ENCODE measurements at regions of chr17 and their contacts with region 1.

Region 1: GRCh38 chr17:40564883-40565768 is at the start of gene CCR7:
- DNase-seq: peak; percentile 79 to 94 (median 91)
- ATAC-seq: peak; percentile 58
- H3K4me3 ChIP-seq: peak within 1 kb of the TSS; percentile 71
- H3K4me3 Mint-ChIP-seq: peak within 1 kb of the TSS; percentile 86
- H3K27ac ChIP-seq: peak within 1 kb of the TSS; percentile 74 to 96
- H3K27ac Mint-ChIP-seq: peak within 1 kb of the TSS; percentile 94
- H3K4me1 ChIP-seq: peaks cover 34% of the 10 kb centered on the region
- H3K4me1 Mint-ChIP-seq: peaks cover 83% of the 10 kb centered on the region
- H3K27me3 ChIP-seq: no peaks in the 10 kb centered on the region
- H3K27me3 Mint-ChIP-seq: no peaks in the 10 kb centered on the region
- CTCF ChIP-seq: no peak
- total RNA-seq, gene CCR7: 196 to 199 TPM

Region 2: DNA sequence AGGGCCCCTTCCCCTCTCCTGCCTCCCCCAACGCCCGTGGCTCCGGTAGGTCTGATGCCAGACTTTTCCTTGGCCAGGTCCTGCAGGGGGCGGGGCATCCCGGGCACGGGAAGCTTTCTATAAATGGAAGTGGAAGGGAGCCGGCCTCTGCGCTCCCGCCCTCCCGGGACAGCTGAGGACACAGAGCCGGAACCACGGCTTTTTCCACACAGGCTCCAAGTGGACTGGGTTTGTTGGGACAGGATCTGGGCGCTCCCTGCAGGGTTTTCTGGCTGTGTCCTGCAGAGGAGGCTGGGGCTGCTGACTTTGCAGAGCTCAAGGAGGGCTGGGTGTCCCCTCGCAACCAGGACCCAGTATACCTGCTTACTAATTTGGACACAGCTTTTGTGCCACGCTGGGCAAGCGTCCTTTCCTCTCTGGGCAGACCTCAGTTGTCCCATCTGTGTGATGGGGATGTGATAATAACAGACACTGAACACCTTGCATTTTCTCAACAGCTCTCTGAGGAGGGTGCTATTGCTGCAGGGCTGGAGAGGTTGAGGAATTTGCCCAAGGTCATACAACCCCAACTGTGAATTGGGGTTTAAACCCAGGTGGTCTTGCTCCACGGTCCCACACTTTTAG is 65.5 kb before region 1 on chr17:
- CTCF ChIA-PET with region 1: no interaction called
- POLR2A ChIA-PET with region 1: no interaction called
- intact Hi-C with region 1: no loop called
- DNase-seq: no peak
- ATAC-seq: no peak
- H3K4me3 ChIP-seq: no peak overlapping the region
- H3K4me3 Mint-ChIP-seq: no peak overlapping the region
- H3K27ac ChIP-seq: no peak overlapping the region
- H3K27ac Mint-ChIP-seq: no peak overlapping the region
- H3K4me1 ChIP-seq: no peaks in the 10 kb centered on the region
- H3K4me1 Mint-ChIP-seq: peaks cover 3% of the 10 kb centered on the region
- H3K27me3 ChIP-seq: no peaks in the 10 kb centered on the region
- H3K27me3 Mint-ChIP-seq: peaks cover 3% of the 10 kb centered on the region
- CTCF ChIP-seq: no peak

Region 3: DNA sequence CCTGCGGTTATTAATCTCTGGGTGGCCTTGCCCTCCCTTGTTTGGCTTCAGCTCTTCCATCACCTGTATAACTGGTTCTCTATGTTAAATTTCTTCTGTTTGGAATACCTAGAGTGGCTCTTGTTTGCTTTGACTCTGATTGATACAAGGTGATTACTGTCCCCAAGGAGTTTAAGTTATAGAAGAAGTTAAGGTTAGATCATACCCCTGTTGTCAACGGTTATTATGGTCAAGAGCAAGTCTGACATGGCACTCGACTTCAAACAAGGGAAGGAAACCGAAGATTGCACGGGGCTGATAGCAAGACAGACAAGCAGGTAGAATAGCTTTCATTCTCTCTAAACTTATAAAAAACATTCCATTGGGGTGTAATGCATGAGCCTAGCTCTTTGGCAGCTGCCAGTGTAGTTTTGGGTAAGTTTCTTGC is 11.1 kb after region 1 on chr17:
- CTCF ChIA-PET with region 1: interaction called, 43 read pairs
- POLR2A ChIA-PET with region 1: interaction called, 32 read pairs
- intact Hi-C with region 1: loop called in 1 of 2 experiments (anchors 1 kb)
- DNase-seq: peak in 2 of 9 experiments; percentile 29 to 48
- ATAC-seq: peak; percentile 54
- H3K4me3 ChIP-seq: no peak overlapping the region
- H3K4me3 Mint-ChIP-seq: peak overlapping the region; percentile 49
- H3K27ac ChIP-seq: peak overlapping the region; percentile 8 to 33
- H3K27ac Mint-ChIP-seq: peak overlapping the region; percentile 93
- H3K4me1 ChIP-seq: peaks cover 56% of the 10 kb centered on the region
- H3K4me1 Mint-ChIP-seq: peaks cover 66% of the 10 kb centered on the region
- H3K27me3 ChIP-seq: no peaks in the 10 kb centered on the region
- H3K27me3 Mint-ChIP-seq: no peaks in the 10 kb centered on the region
- CTCF ChIP-seq: no peak

Region 4: GRCh38 chr17:40582328-40582901 is 17.3 kb after region 1 on chr17:
- CTCF ChIA-PET with region 1: interaction called, 30 read pairs
- POLR2A ChIA-PET with region 1: interaction called, 32 read pairs
- intact Hi-C with region 1: loop called (anchors 1 to 2 kb)
- DNase-seq: peak; percentile 48 to 90 (median 77)
- ATAC-seq: peak; percentile 85
- H3K4me3 ChIP-seq: peak overlapping the region; percentile 15 to 17
- H3K4me3 Mint-ChIP-seq: peak overlapping the region; percentile 79
- H3K27ac ChIP-seq: peak overlapping the region; percentile 60 to 74
- H3K27ac Mint-ChIP-seq: peak overlapping the region; percentile 94
- H3K4me1 ChIP-seq: peaks cover 86% of the 10 kb centered on the region
- H3K4me1 Mint-ChIP-seq: peaks cover 95% of the 10 kb centered on the region
- H3K27me3 ChIP-seq: no peaks in the 10 kb centered on the region
- H3K27me3 Mint-ChIP-seq: no peaks in the 10 kb centered on the region
- CTCF ChIP-seq: no peak

Region 5: GRCh38 chr17:40598663-40599467 is 33.7 kb after region 1 on chr17:
- CTCF ChIA-PET with region 1: interaction called, 168 read pairs
- POLR2A ChIA-PET with region 1: interaction called, 251 read pairs
- intact Hi-C with region 1: loop called (anchors 1 kb)
- DNase-seq: peak in 8 of 9 experiments; percentile 48 to 95 (median 70)
- ATAC-seq: peak; percentile 66
- H3K4me3 ChIP-seq: peak overlapping the region; percentile 12 to 20
- H3K4me3 Mint-ChIP-seq: peak overlapping the region; percentile 69
- H3K27ac ChIP-seq: peak overlapping the region; percentile 82 to 92
- H3K27ac Mint-ChIP-seq: peak overlapping the region; percentile 100
- H3K4me1 ChIP-seq: peaks cover 98% of the 10 kb centered on the region
- H3K4me1 Mint-ChIP-seq: peaks cover 97% of the 10 kb centered on the region
- H3K27me3 ChIP-seq: no peaks in the 10 kb centered on the region
- H3K27me3 Mint-ChIP-seq: no peaks in the 10 kb centered on the region
- CTCF ChIP-seq: no peak

Region 6: GRCh38 chr17:40608061-40608588 is 43.0 kb after region 1 on chr17:
- CTCF ChIA-PET with region 1: interaction called, 638 read pairs
- POLR2A ChIA-PET with region 1: interaction called, 724 read pairs
- intact Hi-C with region 1: loop called in 1 of 2 experiments (anchors 1 kb)
- DNase-seq: peak in 4 of 9 experiments; percentile 42 to 94 (median 76)
- ATAC-seq: peak; percentile 56
- H3K4me3 ChIP-seq: peak overlapping the region; percentile 22 to 43
- H3K4me3 Mint-ChIP-seq: peak overlapping the region; percentile 66
- H3K27ac ChIP-seq: peak overlapping the region; percentile 92 to 99
- H3K27ac Mint-ChIP-seq: peak overlapping the region; percentile 98
- H3K4me1 ChIP-seq: peaks cover 97% of the 10 kb centered on the region
- H3K4me1 Mint-ChIP-seq: peaks cover 96% of the 10 kb centered on the region
- H3K27me3 ChIP-seq: no peaks in the 10 kb centered on the region
- H3K27me3 Mint-ChIP-seq: no peaks in the 10 kb centered on the region
- CTCF ChIP-seq: no peak

Region 7: DNA sequence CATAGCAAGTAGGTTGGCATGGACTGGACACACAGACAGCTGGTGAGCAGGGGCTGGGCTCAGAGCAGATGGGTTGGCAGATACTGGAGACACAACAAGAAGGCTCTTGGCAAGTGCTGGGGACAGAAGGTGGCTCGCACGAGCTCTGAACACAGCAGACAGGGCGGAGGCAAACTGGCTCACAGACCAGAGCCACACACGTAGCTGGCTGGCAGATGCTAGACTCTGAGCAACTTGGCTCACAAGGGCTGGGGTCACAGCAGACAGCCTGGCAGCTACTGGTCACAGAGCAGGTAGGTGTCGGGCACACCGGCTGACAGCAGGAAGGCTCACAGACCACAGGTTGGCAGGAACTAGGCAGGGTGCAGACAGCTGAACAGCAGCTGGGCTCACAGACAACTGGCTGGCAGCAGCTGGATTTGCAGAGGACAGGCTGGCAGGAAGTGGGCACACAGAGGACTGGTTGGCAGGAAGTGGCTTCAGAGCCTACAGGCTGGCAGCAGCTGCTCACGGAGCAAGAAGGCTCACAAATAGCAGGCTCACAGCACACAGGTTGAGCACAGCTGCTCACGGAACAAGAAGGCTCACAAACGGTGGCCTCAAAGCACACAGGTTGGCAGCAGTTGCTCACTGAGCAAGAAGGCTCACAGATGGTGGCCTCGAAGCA is 743.3 kb after region 1 on chr17:
- CTCF ChIA-PET with region 1: no interaction called
- POLR2A ChIA-PET with region 1: no interaction called
- intact Hi-C with region 1: loop called in 1 of 2 experiments (anchors 5 kb)
- DNase-seq: peak; percentile 75 to 95 (median 84)
- ATAC-seq: peak; percentile 82
- H3K4me3 ChIP-seq: peak overlapping the region; percentile 4 to 25
- H3K4me3 Mint-ChIP-seq: peak overlapping the region; percentile 56
- H3K27ac ChIP-seq: peak overlapping the region; percentile 79 to 80
- H3K27ac Mint-ChIP-seq: peak overlapping the region; percentile 98
- H3K4me1 ChIP-seq: peaks cover 48% of the 10 kb centered on the region
- H3K4me1 Mint-ChIP-seq: peaks cover 62% of the 10 kb centered on the region
- H3K27me3 ChIP-seq: no peaks in the 10 kb centered on the region
- H3K27me3 Mint-ChIP-seq: no peaks in the 10 kb centered on the region
- CTCF ChIP-seq: no peak

Measured in CD8-positive, alpha-beta T cell (primary cell).